Natural killer cell (primary cell): ENCODE measurements at regions of chrX and their contacts with region 1.

Region 1: GRCh38 chrX:30713061-30713525 is 59.9 kb downstream of the GK start:
- DNase-seq: peak; percentile 15 to 60
- ATAC-seq: peak in 2 of 3 donors; percentile 38 to 54
- H3K4me3 ChIP-seq: no peak overlapping the region
- H3K4me3 Mint-ChIP-seq: no peak overlapping the region
- H3K27ac ChIP-seq: no peak overlapping the region
- H3K27ac Mint-ChIP-seq: no peak overlapping the region
- H3K4me1 ChIP-seq: no peaks in the 10 kb centered on the region
- H3K4me1 Mint-ChIP-seq: no peaks in the 10 kb centered on the region
- H3K27me3 ChIP-seq: no peaks in the 10 kb centered on the region
- H3K27me3 Mint-ChIP-seq: no peaks in the 10 kb centered on the region
- CTCF ChIP-seq: peak; percentile 52

Region 2: GRCh38 chrX:30340753-30341152 is 372.3 kb before region 1 on chrX:
- intact Hi-C with region 1: no loop called
- DNase-seq: no peak
- ATAC-seq: no peak
- H3K4me3 ChIP-seq: no peak overlapping the region
- H3K4me3 Mint-ChIP-seq: no peak overlapping the region
- H3K27ac ChIP-seq: no peak overlapping the region
- H3K27ac Mint-ChIP-seq: no peak overlapping the region
- H3K4me1 ChIP-seq: no peaks in the 10 kb centered on the region
- H3K4me1 Mint-ChIP-seq: no peaks in the 10 kb centered on the region
- H3K27me3 ChIP-seq: no peaks in the 10 kb centered on the region
- H3K27me3 Mint-ChIP-seq: no peaks in the 10 kb centered on the region
- CTCF ChIP-seq: no peak

Region 3: GRCh38 chrX:30570505-30570904 is 142.6 kb before region 1 on chrX:
- intact Hi-C with region 1: loop called (anchors 2 kb)
- DNase-seq: peak in 1 of 2 donors; percentile 67
- ATAC-seq: peak in 1 of 3 donors; percentile 59
- H3K4me3 ChIP-seq: no peak overlapping the region
- H3K4me3 Mint-ChIP-seq: no peak overlapping the region
- H3K27ac ChIP-seq: no peak overlapping the region
- H3K27ac Mint-ChIP-seq: no peak overlapping the region
- H3K4me1 ChIP-seq: peaks cover 5% of the 10 kb centered on the region
- H3K4me1 Mint-ChIP-seq: peaks cover 0 to 29% of the 10 kb centered on the region in 2 donors
- H3K27me3 ChIP-seq: no peaks in the 10 kb centered on the region
- H3K27me3 Mint-ChIP-seq: no peaks in the 10 kb centered on the region
- CTCF ChIP-seq: peak; percentile 55

Region 4: GRCh38 chrX:30635630-30636029 is 77.5 kb before region 1 on chrX:
- intact Hi-C with region 1: loop called (anchors 2 kb)
- DNase-seq: peak in 1 of 2 donors; percentile 41
- ATAC-seq: peak in 2 of 3 donors; percentile 40 to 56
- H3K4me3 ChIP-seq: no peak overlapping the region
- H3K4me3 Mint-ChIP-seq: no peak overlapping the region
- H3K27ac ChIP-seq: no peak overlapping the region
- H3K27ac Mint-ChIP-seq: no peak overlapping the region
- H3K4me1 ChIP-seq: no peaks in the 10 kb centered on the region
- H3K4me1 Mint-ChIP-seq: no peaks in the 10 kb centered on the region
- H3K27me3 ChIP-seq: no peaks in the 10 kb centered on the region
- H3K27me3 Mint-ChIP-seq: no peaks in the 10 kb centered on the region
- CTCF ChIP-seq: peak; percentile 43